ENCODE measurements at regions of chr11 and their contacts with region 1.

Region 1: GRCh38 chr11:14288189-14288935 is 70.6 kb downstream of the RRAS2 start:
- DNase-seq: no peak
- ATAC-seq: no peak
- H3K4me3 ChIP-seq: no peak overlapping the region
- H3K4me3 Mint-ChIP-seq: peak overlapping the region in 2 of 10 donors; percentile 54 to 62
- H3K27ac ChIP-seq: no peak overlapping the region
- H3K27ac Mint-ChIP-seq: peak overlapping the region in 1 of 9 donors; percentile 87
- H3K4me1 ChIP-seq: no peaks in the 10 kb centered on the region
- H3K4me1 Mint-ChIP-seq: peaks cover 0 to 34% (median 2%) of the 10 kb centered on the region in 7 donors
- H3K27me3 ChIP-seq: no peaks in the 10 kb centered on the region
- H3K27me3 Mint-ChIP-seq: no peaks in the 10 kb centered on the region

Region 2: DNA sequence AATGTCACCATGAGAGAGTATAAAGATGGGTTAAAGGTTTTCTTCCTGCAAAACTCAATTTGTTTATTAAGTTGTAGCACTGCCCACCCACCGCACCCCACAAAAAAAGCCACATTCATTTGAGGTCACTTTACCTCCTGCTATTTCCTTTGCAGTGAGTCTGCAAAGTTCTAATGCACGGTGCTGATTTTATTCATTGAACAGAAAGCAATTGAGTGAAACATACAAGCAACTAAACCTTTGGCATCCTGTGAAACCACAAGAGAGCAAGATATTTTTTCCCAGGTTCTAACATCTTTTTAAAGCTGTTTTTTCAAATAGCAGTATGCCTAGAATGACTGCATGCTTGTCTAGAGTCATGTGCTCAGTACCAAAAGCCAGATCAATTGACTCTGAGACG is 31.7 kb after region 1 on chr11:
- CTCF ChIA-PET with region 1: no interaction called
- POLR2A ChIA-PET with region 1: no interaction called
- intact Hi-C with region 1: loop called in 1 of 2 experiments (anchors 1 kb)
- DNase-seq: peak in 7 of 9 donors; percentile 24 to 65 (median 47)
- ATAC-seq: peak; percentile 82
- H3K4me3 ChIP-seq: peak overlapping the region; percentile 15
- H3K4me3 Mint-ChIP-seq: peak overlapping the region in 9 of 10 donors; percentile 2 to 67 (median 42)
- H3K27ac ChIP-seq: no peak overlapping the region
- H3K27ac Mint-ChIP-seq: peak overlapping the region in 4 of 9 donors; percentile 28 to 50 (median 48)
- H3K4me1 ChIP-seq: peaks cover 14 to 38% of the 10 kb centered on the region in 2 donors
- H3K4me1 Mint-ChIP-seq: peaks cover 8 to 72% (median 34%) of the 10 kb centered on the region in 7 donors
- H3K27me3 ChIP-seq: no peaks in the 10 kb centered on the region
- H3K27me3 Mint-ChIP-seq: no peaks in the 10 kb centered on the region

Region 3: GRCh38 chr11:14399087-14399486 is 110.7 kb after region 1 on chr11:
- CTCF ChIA-PET with region 1: no interaction called
- POLR2A ChIA-PET with region 1: no interaction called
- intact Hi-C with region 1: no loop called
- DNase-seq: no peak
- ATAC-seq: no peak
- H3K4me3 ChIP-seq: no peak overlapping the region
- H3K4me3 Mint-ChIP-seq: no peak overlapping the region
- H3K27ac ChIP-seq: no peak overlapping the region
- H3K27ac Mint-ChIP-seq: no peak overlapping the region
- H3K4me1 ChIP-seq: no peaks in the 10 kb centered on the region
- H3K4me1 Mint-ChIP-seq: no peaks in the 10 kb centered on the region
- H3K27me3 ChIP-seq: no peaks in the 10 kb centered on the region
- H3K27me3 Mint-ChIP-seq: peaks cover 0 to 32% (median 0%) of the 10 kb centered on the region in 5 donors

Measured in naive thymus-derived CD4-positive, alpha-beta T cell (primary cell).